ENCODE measurements at regions of chr2 and their contacts with region 1.

Region 1: DNA sequence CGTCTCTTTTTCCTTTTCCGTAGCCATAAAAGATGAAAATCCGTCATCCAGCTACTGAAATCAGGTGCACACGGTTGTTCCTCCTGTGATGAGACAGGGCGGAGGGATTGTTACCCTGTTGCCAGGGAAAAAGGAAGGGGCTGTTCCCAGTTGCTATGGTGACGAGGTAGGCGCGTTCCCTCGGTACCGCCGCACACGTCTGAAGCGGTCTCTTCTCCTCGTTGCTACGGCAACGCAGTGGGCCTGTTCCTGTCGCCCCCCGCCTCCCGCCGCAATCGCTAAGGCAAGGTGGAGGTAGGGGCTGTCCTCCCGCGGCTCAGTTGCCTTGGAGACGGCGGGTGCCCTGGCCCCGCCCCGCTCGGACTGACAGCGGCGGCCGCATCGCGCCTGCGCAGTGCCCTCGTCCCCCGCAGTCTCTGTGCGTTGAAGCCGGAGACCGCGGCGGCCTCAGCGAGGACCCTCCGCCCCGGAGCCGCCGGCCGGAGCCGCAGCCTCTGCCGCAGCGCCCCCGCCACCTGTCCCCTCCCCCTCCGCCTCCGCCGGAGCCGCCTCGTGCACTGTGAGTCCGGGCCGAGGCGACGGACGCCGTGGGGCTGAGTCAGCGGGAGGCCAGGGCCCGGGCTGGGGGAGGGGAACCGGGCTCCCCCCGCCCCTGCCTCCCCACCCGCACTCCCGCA is at the start of gene MAPRE3:
- DNase-seq: peak; percentile 92
- ATAC-seq: peak; percentile 94
- total RNA-seq, gene MAPRE3: 58.9 TPM

Region 2: DNA sequence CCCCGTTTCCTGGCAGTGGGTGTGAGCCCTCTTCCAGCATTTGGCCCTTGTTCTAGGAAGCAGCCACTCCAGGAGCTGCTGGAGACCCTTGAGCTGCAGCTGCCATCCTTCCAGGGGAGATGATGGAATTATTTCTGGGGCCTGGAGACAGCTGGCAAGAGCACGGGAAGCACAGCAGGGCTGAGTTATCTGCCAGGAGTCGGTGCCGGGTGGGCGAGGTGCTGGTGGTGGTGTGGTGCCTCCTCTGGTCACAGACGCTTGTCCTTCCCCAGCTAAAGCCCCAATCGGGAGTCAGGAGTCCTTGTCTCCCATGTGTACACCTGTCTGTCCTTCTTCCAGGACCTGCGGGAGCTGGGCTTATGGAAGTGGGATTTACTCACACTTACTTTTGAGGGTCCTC is 86.4 kb before region 1 on chr2:
- intact Hi-C with region 1: no loop called
- DNase-seq: no peak
- ATAC-seq: no peak

Region 3: GRCh38 chr2:27016801-27017325 is 46.5 kb after region 1 on chr2:
- intact Hi-C with region 1: loop called (anchors 2 kb)
- DNase-seq: no peak
- ATAC-seq: peak; percentile 8

Region 4: DNA sequence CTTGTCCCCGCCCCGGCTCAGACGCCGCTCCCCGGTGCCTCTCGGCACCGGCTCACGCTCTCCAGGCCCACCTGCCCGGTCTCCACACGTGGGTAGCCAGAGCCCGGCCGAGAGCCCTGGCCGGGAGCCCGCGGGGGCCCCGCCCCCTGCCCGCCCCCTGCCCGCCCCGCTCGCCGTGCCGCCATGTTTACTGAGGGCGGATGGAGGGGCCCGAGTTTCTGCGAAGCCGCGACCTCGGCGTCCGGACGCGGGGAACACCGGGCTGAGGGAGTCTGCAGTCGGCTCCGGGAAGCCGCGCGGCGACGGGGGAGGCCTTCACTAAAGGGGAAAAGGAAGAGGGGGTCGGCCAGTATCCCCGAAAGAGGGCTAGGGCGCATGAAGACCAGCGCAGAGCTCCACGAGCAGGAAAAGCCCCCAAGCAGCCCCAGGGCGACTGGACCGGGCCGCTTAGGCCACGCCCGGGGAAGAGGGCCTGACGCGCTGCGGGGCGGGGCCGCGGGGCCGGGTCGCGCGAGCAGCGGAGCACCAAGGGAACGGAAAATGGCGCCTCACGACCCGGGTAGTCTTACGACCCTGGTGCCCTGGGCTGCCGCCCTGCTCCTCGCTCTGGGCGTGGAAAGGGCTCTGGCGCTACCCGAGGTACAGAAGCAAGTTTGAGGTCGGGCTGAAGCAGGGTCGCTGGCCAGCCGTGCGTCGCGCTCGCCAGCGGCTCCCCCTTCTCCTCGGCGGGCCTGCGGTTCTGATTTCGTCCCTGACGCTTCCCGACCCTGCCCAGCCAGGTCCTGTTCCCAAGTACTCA is 241.6 kb after region 1 on chr2 and contains the starts of genes ATRAID and SLC5A6:
- intact Hi-C with region 1: loop called (anchors 5 kb)
- DNase-seq: peak; percentile 95
- ATAC-seq: peak; percentile 98
- total RNA-seq, gene ATRAID: 115 TPM
- total RNA-seq, gene SLC5A6: 12.3 TPM

Measured in Right ventricle myocardium inferior (tissue), 1 donor.